Right ventricle myocardium inferior (tissue), 1 donor: ENCODE measurements at regions of chr22 and their contacts with region 1.

Region 1: DNA sequence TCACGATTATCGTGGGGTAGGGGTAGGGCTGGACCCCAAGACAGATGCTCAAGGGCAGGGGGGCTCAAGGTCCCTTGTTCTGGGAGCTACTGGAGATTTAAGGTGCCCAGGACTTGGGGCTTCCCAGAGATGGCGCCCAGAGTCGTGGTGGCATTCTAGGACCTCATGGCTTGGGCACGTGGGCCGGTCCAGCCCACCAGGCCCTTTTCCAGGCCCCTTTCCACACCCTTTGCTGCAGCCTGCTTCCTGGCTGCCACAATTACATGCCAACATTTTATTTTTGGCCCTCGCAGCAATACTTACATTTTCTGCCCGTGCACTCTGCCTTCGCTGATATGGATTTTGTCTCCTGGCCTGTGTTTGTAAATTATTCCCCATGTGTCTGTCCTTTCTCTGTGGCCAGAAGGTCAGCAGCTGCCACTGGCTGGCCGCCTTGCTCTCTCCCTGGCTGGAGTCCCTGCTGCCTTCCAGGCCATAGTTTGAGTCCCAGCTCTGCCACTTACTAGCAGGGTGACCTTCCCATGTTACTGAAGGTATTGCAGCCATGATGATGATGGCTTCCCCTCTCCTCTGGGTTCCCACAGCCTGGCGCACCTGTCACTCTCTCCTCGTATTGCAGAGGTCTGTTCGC is 11.2 kb downstream of the MB start:
- DNase-seq: peak; percentile 74
- ATAC-seq: peak; percentile 73

Region 2: GRCh38 chr22:35299673-35300497 is 306.1 kb before region 1 on chr22 and contains the start of gene TOM1:
- intact Hi-C with region 1: no loop called
- DNase-seq: peak; percentile 99
- ATAC-seq: peak; percentile 97
- total RNA-seq, gene TOM1: 62.5 TPM

Region 3: DNA sequence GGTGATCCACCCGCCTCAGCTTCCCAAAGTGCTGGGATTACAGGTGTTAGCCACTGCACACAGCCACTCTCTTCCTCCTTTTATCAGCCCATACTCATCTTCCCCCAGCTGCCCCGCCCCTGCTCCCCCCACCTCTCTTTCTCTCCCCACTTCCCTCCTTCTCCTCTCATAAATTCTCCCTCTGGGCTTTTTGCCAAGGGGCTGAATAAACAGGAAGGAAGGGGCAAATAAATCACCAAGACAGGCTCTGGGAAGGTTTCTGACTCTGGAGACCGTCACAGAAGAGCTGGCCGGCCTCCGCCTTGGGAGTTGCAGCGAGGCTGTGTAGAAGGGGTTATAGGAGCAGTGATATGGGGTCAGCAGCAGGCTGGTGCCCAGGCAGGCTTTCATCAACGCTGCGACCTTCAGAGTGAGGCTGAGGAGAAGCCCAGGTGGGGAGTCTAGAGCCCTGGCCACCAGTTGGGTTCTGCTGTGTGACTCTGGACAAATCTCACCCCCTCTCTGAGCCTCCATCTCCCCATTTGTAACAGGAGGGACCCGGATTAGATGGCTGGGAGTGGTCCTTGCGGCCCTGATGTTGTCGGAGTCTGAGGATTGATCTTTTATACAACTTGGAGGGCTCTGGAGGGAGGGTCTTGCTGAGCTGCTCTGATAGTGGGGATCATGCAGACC is 127.9 kb before region 1 on chr22:
- intact Hi-C with region 1: no loop called
- DNase-seq: no peak
- ATAC-seq: peak; percentile 52

Region 4: GRCh38 chr22:35510481-35510934 is 95.5 kb before region 1 on chr22:
- intact Hi-C with region 1: no loop called
- DNase-seq: no peak
- ATAC-seq: no peak

Region 5: DNA sequence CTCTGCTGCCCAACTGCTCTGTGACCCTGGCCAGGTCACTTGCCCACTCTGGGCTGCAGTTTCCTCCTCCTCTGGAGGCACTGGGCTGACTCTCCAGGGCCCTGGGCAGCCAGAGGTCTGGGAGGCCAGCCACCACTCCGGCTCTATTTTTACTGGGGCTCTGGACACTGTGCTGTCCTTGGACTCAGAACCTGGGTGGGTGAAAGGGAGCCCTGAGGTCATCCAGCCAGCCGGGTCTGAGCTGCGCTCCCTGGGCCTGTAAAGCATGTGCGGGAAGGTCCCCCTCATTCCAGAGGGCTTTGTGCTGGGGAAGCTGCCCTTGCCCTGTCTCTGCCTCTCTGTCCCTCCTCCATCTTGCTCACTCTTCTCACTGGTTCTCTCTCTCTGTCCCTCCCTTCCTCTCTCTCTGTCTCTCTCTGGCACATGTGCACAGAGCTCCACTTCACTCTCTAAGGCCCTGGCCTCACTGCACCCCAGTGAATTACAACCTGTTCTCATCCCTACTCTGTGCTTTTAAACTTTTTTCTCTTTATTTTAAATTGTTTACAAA is 13.5 kb before region 1 on chr22:
- intact Hi-C with region 1: loop called (anchors 2 kb)
- DNase-seq: peak; percentile 70
- ATAC-seq: peak; percentile 60